Activated T-helper 1 cell treated with anti-CD3 and anti-CD28 coated beads, Interleukin-12 subunit alpha, Interleukin-12 subunit beta, Interleukin-2, Interleukin-4 antibody, amounts not matched to agents 30 ng/mL and 10 ng/mL and 1 ng/mL, durations not matched to agents 14 hours and 24 hours and 36 hours (primary cell): ENCODE measurements at regions of chr12 and their contacts with region 1.

Region 1: DNA sequence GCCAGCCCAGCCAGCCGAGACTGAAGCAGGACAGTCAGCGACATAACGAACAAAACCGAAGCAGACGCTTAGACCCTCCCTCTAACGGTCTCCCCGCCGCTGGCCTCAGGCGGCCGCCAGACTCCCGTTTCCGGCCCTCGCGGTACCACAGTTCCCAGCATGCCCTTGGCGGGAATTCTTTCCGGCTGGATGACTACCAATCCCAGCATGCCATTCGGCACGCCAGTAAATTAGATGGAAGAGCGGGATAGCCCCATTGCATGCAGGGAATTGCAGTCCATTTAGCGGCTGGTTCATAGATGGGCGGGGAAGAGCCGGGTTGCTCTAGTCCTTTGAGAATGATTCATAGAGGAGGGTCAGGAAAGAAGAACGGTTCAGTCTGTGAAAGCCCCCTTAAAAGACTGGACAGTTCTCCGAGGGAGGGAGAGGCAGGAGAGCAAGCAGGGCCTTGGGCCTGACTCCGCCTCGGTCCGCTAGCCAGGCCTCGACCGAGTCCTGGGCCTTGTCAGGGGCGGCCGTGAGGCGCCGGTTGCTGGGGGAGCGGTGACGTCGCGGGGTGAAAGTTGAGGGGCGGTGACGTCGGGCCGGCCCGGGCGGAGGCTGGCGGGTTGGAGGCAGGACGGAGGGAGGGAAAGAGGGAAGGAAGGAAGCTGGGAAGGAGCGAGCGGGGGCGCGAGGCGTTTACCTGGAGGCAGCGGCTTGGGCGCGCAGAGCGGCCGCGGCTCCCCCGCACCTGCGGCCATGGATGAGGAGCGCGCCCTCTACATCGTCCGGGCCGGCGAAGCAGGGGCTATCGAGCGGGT is at the start of gene RIC8B:
- DNase-seq: peak; percentile 77
- H3K4me3 Mint-ChIP-seq: peak within 1 kb of the TSS; percentile 100
- H3K27ac Mint-ChIP-seq: peak within 1 kb of the TSS; percentile 98
- H3K4me1 Mint-ChIP-seq: peaks cover 37% of the 10 kb centered on the region
- H3K27me3 Mint-ChIP-seq: no peaks in the 10 kb centered on the region
- total RNA-seq, gene RIC8B: 11.4 and 12.3 TPM in 2 replicates

Region 2: DNA sequence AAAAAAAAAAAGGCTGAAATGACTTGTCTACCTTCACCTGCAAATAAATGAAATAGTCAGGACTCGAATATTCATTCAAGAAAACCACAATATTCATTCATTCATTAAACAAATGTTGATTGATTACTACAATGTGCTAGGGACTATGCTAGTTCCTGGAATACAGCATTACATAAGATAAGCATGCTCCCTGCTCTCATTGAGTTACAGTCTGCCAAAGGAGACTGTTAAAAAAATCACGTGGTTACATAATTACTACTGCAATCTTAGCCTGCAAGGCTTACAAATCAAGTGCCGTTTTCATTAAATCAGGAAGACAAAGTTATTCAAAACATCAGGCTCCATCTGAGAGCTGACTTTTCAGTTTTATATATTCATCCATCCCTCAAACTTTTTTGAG is 70.1 kb before region 1 on chr12:
- intact Hi-C with region 1: no loop called
- DNase-seq: no peak
- H3K4me3 Mint-ChIP-seq: no peak overlapping the region
- H3K27ac Mint-ChIP-seq: no peak overlapping the region
- H3K4me1 Mint-ChIP-seq: no peaks in the 10 kb centered on the region
- H3K27me3 Mint-ChIP-seq: peaks cover 6% of the 10 kb centered on the region

Region 3: GRCh38 chr12:106717673-106718072 is 56.5 kb before region 1 on chr12:
- intact Hi-C with region 1: no loop called
- DNase-seq: no peak
- H3K4me3 Mint-ChIP-seq: no peak overlapping the region
- H3K27ac Mint-ChIP-seq: no peak overlapping the region
- H3K4me1 Mint-ChIP-seq: no peaks in the 10 kb centered on the region
- H3K27me3 Mint-ChIP-seq: peaks cover 3% of the 10 kb centered on the region

Region 4: DNA sequence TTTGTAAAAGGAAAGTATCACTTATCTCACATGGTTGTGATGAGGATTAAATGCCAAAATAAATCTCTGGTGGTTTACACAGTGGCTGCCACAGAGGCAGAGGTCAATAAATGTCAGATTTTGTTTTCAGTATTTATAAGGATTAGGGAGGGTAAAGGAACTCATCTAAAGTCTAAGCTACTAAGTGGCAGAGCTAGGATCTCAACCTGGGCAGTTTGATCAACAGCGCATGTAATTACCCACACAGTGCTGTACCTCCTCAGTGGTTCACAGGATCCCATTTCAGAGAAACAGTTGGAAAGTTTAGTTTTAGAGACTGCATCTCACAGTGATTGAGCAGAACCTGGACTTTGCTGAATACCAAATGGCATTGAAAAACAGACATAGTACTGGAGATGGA is 44.6 kb before region 1 on chr12:
- intact Hi-C with region 1: loop called (anchors 2 kb)
- DNase-seq: no peak
- H3K4me3 Mint-ChIP-seq: no peak overlapping the region
- H3K27ac Mint-ChIP-seq: no peak overlapping the region
- H3K4me1 Mint-ChIP-seq: no peaks in the 10 kb centered on the region
- H3K27me3 Mint-ChIP-seq: no peaks in the 10 kb centered on the region

Region 5: GRCh38 chr12:106819991-106820390 is 45.8 kb after region 1 on chr12:
- intact Hi-C with region 1: loop called (anchors 5 kb)
- DNase-seq: no peak
- H3K4me3 Mint-ChIP-seq: no peak overlapping the region
- H3K27ac Mint-ChIP-seq: no peak overlapping the region
- H3K4me1 Mint-ChIP-seq: no peaks in the 10 kb centered on the region
- H3K27me3 Mint-ChIP-seq: no peaks in the 10 kb centered on the region

Region 6: GRCh38 chr12:106955377-106956047 is 181.3 kb after region 1 on chr12 and contains the start of gene TMEM263:
- intact Hi-C with region 1: loop called (anchors 1 kb)
- DNase-seq: peak; percentile 90
- H3K4me3 Mint-ChIP-seq: peak within 1 kb of the TSS; percentile 97
- H3K27ac Mint-ChIP-seq: peak within 1 kb of the TSS; percentile 94
- H3K4me1 Mint-ChIP-seq: peaks cover 21% of the 10 kb centered on the region
- H3K27me3 Mint-ChIP-seq: peaks cover 3% of the 10 kb centered on the region
- total RNA-seq, gene TMEM263: 25.5 and 25.9 TPM in 2 replicates

Region 7: DNA sequence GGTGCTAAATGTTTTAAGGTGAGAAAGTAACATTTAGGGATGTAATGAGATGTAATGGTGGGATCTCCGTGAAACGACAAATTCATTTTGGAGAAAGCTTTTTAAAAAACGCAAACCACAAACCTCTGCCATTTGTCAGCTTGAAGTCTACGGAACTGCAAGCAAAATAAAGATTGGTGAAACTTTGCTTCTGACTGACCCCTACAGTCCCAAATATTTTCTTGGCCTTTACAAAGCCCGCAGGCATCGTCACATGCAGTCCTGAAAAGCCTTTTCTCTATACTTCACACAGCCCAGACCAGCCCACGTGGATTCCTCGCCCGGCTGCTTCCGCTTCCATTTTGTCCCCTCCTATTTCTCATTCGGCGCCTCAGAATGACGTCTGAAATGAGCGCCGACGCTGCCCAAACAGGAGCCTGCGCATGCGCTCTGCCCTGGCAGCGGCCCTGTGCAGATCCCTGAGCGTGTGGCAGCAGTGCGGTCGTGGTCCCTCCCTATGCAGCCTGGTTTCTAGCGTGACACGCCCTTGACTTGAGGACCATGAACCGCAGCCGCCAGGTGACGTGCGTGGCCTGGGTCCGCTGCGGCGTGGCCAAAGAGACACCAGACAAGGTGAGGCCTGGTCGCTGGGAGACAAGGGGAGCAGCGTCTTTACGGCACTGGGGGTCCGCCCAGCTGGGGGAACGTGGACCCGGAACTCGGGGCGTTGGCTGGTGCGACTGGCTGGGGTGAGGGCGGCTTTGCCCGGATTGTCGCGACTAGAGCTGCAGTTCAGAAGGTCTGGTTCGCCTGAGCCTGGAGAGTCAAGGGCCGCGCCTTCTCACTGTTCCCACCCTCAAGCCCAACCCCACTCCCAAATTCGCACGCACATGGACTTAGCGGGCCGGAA is 911.4 kb after region 1 on chr12 and contains the start of gene PWP1:
- intact Hi-C with region 1: loop called (anchors 5 kb)
- DNase-seq: peak; percentile 95
- H3K4me3 Mint-ChIP-seq: peak within 1 kb of the TSS; percentile 96
- H3K27ac Mint-ChIP-seq: peak within 1 kb of the TSS; percentile 97
- H3K4me1 Mint-ChIP-seq: peaks cover 36% of the 10 kb centered on the region
- H3K27me3 Mint-ChIP-seq: no peaks in the 10 kb centered on the region
- total RNA-seq, gene PWP1: 54.4 and 57.1 TPM in 2 replicates